ENCODE measurements at regions of chr9 and their contacts with region 1.

Region 1: GRCh38 chr9:406886-407654 is 192.4 kb downstream of the DOCK8 start:
- DNase-seq: no peak
- ATAC-seq: peak; percentile 84 to 89 (median 88)
- H3K4me3 ChIP-seq: no peak overlapping the region
- H3K27ac ChIP-seq: no peak overlapping the region
- H3K4me1 ChIP-seq: no peaks in the 10 kb centered on the region
- H3K27me3 ChIP-seq: no peaks in the 10 kb centered on the region
- CTCF ChIP-seq: peak in 11 of 12 donors; percentile 18 to 59 (median 50)
- POLR2A ChIP-seq: no peak

Region 2: DNA sequence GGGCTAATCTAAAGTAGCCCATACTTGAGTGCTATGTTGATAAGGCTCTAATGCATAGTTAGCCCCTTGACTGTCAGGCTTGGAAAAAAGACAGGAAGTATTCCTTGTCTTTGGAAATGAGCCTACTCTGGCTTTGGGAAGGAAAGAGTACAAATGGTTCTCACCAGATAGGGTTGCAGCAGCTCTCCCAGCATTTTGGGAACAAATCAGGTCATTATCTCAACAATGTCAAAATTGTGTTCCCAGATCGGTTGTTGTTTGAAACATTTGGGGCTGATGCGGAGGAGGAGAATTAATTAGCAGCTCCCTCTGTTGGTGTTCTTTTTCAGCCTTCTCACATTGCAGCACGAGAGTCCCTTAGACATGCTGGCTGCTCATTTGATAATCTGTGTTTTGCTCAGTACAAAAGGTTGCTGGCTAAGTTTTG is 139.7 kb after region 1 on chr9:
- intact Hi-C with region 1: loop called in 2 of 10 experiments (anchors 5 to 10 kb)
- DNase-seq: no peak
- ATAC-seq: peak; percentile 69 to 76 (median 71)
- H3K4me3 ChIP-seq: peak overlapping the region in 9 of 12 donors; percentile 10 to 35 (median 25)
- H3K27ac ChIP-seq: peak overlapping the region; percentile 50 to 84 (median 70)
- H3K4me1 ChIP-seq: peaks cover 5 to 50% (median 24%) of the 10 kb centered on the region in 12 donors
- H3K27me3 ChIP-seq: no peaks in the 10 kb centered on the region
- CTCF ChIP-seq: peak; percentile 6 to 59 (median 40)
- POLR2A ChIP-seq: no peak

Region 3: GRCh38 chr9:607417-607816 is 200.3 kb after region 1 on chr9:
- intact Hi-C with region 1: loop called in 3 of 10 experiments (anchors 5 to 10 kb)
- DNase-seq: no peak
- ATAC-seq: peak in 1 of 4 donors; percentile 28
- H3K4me3 ChIP-seq: no peak overlapping the region
- H3K27ac ChIP-seq: no peak overlapping the region
- H3K4me1 ChIP-seq: peaks cover 0 to 27% (median 0%) of the 10 kb centered on the region in 12 donors
- H3K27me3 ChIP-seq: no peaks in the 10 kb centered on the region
- CTCF ChIP-seq: no peak
- POLR2A ChIP-seq: no peak

Region 4: DNA sequence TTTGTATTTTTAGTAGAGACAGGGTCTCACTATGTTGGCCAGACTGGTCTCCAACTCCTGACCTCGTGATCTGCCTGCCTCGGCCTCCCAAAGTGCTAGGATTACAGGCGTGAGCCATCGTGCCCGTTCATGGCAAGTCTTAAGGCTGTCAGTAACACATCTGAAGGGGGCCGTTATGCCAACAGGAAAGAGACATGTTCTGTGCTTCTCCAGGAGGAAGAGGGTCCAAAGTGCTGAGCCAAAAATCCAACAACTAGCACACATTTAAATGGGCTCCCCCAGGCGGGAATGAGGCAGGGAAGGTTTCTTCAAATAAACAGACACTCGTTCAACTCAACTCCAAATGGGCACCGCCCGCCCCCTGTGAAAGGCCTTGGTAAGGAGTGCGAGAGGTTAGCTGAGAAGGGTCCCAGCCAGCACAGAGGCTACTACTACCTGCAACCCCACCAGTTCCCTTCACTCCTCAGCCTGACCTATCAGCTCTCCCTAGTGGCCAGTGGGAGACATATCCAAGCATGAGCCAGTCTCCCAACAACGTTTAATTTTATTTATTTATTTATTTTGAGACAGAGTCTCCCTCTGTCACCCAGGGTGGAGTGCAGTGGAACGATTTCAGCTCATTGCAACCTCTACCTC is 350.3 kb after region 1 on chr9:
- intact Hi-C with region 1: loop called in 7 of 10 experiments (anchors 5 to 10 kb)
- DNase-seq: peak in 2 of 5 donors; percentile 41 to 46
- ATAC-seq: peak; percentile 59 to 78 (median 70)
- H3K4me3 ChIP-seq: no peak overlapping the region
- H3K27ac ChIP-seq: no peak overlapping the region
- H3K4me1 ChIP-seq: peaks cover 0 to 20% (median 4%) of the 10 kb centered on the region in 12 donors
- H3K27me3 ChIP-seq: no peaks in the 10 kb centered on the region
- CTCF ChIP-seq: peak; percentile 39 to 68 (median 52)
- POLR2A ChIP-seq: no peak

Region 5: GRCh38 chr9:763692-764524 is 356.8 kb after region 1 on chr9:
- intact Hi-C with region 1: loop called in 9 of 10 experiments (anchors 2 to 10 kb)
- DNase-seq: peak; percentile 65 to 74 (median 72)
- ATAC-seq: peak; percentile 90 to 99 (median 96)
- H3K4me3 ChIP-seq: peak overlapping the region in 6 of 12 donors; percentile 3 to 39 (median 26)
- H3K27ac ChIP-seq: no peak overlapping the region
- H3K4me1 ChIP-seq: peaks cover 0 to 11% (median 0%) of the 10 kb centered on the region in 12 donors
- H3K27me3 ChIP-seq: peaks cover 0 to 3% (median 0%) of the 10 kb centered on the region in 9 donors
- CTCF ChIP-seq: peak; percentile 76 to 97 (median 92)
- POLR2A ChIP-seq: no peak

Region 6: DNA sequence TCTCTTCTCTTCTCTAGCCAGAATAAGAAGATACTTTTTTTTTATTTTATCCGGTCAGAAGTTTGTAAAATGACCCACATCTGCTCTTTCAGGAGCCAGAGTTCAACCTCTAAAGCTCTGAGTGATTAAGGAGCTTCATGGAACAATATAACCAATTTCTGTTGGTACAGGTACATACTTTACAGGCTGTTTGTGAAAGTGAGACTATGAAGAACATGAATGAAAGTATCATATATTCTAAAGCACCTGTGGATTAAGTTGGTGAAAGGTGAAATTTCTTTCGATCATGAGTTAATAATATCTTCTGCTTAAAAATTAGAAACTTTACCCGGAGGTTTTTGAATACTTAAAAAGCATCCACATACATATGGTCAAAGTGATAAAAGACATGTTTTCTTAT is 708.3 kb after region 1 on chr9:
- intact Hi-C with region 1: no loop called
- DNase-seq: no peak
- ATAC-seq: no peak
- H3K4me3 ChIP-seq: no peak overlapping the region
- H3K27ac ChIP-seq: no peak overlapping the region
- H3K4me1 ChIP-seq: no peaks in the 10 kb centered on the region
- H3K27me3 ChIP-seq: no peaks in the 10 kb centered on the region
- CTCF ChIP-seq: no peak
- POLR2A ChIP-seq: no peak

Measured in heart left ventricle (tissue), 16 donors.